ENCODE measurements at regions of chr11 and their contacts with region 1.

Region 1: GRCh38 chr11:61816736-61817455 is at the start of gene FADS1:
- DNase-seq: peak; percentile 60
- ATAC-seq: peak; percentile 71
- H3K4me3 ChIP-seq: peak within 1 kb of the TSS; percentile 81
- H3K27ac ChIP-seq: peak within 1 kb of the TSS; percentile 87
- H3K4me1 ChIP-seq: peaks cover 3% of the 10 kb centered on the region; the same call in 1 of the 2 replicates
- H3K27me3 ChIP-seq: no peaks in the 10 kb centered on the region
- CTCF ChIP-seq: peak; percentile 53 to 73 (median 69)
- EP300 ChIP-seq: no peak
- POLR2A ChIP-seq: peak; percentile 60
- RAD21 ChIP-seq: no peak
- polyA plus RNA-seq, gene FADS1: 8.8 to 14.6 TPM

Region 2: GRCh38 chr11:61679893-61680621 is 136.8 kb before region 1 on chr11 and contains the start of gene DAGLA:
- CTCF ChIA-PET with region 1: no interaction called
- POLR2A ChIA-PET with region 1: no interaction called
- RAD21 ChIA-PET with region 1: no interaction called
- SMC1A ChIA-PET with region 1: no interaction called
- in situ Hi-C with region 1: no loop called
- intact Hi-C with region 1: no loop called
- DNase-seq: no peak
- ATAC-seq: peak; percentile 91
- H3K4me3 ChIP-seq: no peak within 1 kb of the TSS
- H3K27ac ChIP-seq: no peak within 1 kb of the TSS
- H3K4me1 ChIP-seq: no peaks in the 10 kb centered on the region
- H3K27me3 ChIP-seq: peaks cover 6 to 11% of the 10 kb centered on the region in 2 experiments
- CTCF ChIP-seq: peak; percentile 79 to 95 (median 85)
- EP300 ChIP-seq: no peak
- POLR2A ChIP-seq: no peak
- RAD21 ChIP-seq: peak; percentile 52
- polyA plus RNA-seq, gene DAGLA: not detected

Region 3: DNA sequence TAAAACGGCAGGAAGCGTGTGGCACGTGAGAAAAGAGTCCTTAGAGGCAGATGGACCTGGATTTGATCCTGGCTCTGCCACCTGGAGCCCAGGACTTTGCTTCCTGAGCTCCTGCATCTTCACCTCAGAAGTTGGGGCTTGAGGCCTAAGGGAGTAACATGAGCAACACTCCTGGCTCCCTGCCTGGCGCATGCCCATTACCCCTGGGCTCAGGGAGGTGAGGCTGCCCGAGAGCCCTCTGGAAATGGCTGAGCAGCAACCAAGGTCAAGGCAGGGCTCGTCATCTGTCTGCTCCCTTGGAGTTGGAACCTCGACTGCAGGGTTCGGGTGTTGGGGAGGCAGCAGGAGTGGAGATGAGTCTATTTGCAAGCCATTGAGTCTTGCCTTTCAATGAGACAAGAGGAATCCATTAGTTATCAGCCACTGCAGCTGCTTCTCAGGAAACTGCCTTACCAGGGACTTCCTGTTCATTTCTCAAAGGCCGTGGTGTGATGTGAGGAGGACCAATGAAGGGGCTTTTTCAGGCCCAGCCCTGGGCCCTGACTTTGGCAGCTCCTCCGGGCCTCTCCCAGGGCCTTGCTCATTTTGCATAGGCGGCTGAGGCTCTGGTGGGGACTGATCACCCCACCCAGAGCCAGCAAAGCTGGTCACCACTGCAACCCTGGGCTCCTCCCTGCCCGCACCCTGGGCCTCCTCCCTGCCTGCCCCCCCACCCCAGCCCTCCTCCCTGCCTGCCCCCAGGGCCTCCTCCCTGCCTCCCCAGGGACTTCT is 17.6 kb after region 1 on chr11:
- CTCF ChIA-PET with region 1: interaction called, 56 read pairs
- POLR2A ChIA-PET with region 1: interaction called, 167 read pairs
- RAD21 ChIA-PET with region 1: interaction called, 51 read pairs
- SMC1A ChIA-PET with region 1: interaction called, 67 read pairs
- in situ Hi-C with region 1: no loop called
- intact Hi-C with region 1: no loop called
- DNase-seq: peak; percentile 87
- ATAC-seq: peak; percentile 97
- H3K4me3 ChIP-seq: peak overlapping the region; percentile 40
- H3K27ac ChIP-seq: peak overlapping the region; percentile 95
- H3K4me1 ChIP-seq: peaks cover 36% of the 10 kb centered on the region
- H3K27me3 ChIP-seq: no peaks in the 10 kb centered on the region
- CTCF ChIP-seq: no peak
- EP300 ChIP-seq: no peak
- POLR2A ChIP-seq: peak; percentile 76
- RAD21 ChIP-seq: no peak

Measured in GM12878 (cell line).